Left lung (tissue), 14 donors: ENCODE measurements at regions of chr6 and their contacts with region 1.

Region 1: DNA sequence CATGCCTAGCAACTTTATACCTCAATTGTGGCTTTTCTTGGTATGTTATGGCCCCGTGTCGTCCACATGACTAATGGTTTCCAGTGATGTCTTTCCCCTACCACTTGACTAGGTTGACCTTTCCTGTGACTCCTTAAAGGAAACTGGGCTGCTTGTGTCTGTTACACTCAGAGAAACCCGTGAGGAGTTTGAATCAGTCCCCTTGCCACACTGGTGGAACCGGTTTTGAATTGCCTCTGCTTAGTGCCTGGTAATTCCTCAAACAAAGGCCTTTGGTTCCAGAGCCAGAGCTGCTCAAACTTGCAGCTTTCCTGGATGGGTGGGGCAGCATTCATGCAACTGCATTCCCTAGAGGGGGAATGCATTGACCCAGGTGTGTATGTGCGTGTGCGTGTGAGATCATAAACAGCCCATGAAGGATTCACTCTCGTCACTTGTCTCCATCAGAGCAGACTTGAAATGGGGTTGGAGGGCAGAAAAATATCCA is 22.0 kb downstream of the ECT2L start:
- DNase-seq: peak in 3 of 4 donors; percentile 65 to 91 (median 82)
- ATAC-seq: peak; percentile 83
- H3K4me3 ChIP-seq: no peak overlapping the region
- H3K27ac ChIP-seq: peak overlapping the region; percentile 48 to 82
- H3K4me1 ChIP-seq: peaks cover 0 to 5% of the 10 kb centered on the region in 2 donors
- H3K27me3 ChIP-seq: no peaks in the 10 kb centered on the region
- CTCF ChIP-seq: no peak

Region 2: DNA sequence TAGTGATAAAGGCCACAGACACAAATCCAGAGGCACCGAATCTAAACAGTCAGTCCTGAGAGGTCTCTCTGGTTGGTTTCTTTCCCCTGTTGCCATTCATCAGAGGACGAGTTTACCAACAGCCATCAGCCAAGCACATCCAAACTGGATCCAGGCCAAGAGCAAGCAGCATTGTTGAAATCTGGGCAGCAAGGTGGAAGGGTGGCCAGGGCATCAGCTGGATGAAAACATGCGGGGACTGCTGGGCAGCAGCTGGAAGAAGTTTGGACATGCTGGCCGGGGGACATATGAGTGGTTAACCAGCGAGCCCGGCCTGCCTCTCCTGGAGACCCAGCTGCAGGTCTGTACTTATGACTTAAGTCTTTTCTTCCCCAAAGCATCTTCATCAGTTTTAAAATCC is 440.0 kb before region 1 on chr6 and contains the start of gene SMIM28:
- intact Hi-C with region 1: no loop called
- DNase-seq: no peak
- ATAC-seq: no peak
- H3K4me3 ChIP-seq: no peak within 1 kb of the TSS
- H3K27ac ChIP-seq: no peak within 1 kb of the TSS
- H3K4me1 ChIP-seq: no peaks in the 10 kb centered on the region
- H3K27me3 ChIP-seq: no peaks in the 10 kb centered on the region
- CTCF ChIP-seq: no peak
- polyA plus RNA-seq, gene SMIM28: not detected

Region 3: DNA sequence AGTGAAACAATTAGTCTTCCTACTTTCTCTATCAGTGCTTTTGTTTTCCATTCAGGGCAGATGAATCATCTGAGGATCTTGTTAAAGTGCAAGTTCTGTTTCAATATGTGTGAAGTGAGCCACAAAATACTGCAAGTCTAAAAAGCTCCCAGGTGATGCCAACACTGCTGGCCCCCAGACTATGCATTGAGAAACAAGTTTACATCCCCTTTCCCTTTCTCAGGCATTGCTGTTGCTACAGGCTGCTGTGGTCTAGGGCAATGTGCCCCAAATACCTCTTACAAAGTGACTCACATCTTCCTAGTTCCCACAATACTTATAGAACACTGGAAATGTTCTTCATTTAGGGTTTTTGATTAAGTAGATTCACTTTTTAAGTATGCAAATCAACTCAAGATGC is 242.5 kb after region 1 on chr6:
- intact Hi-C with region 1: no loop called
- DNase-seq: no peak
- ATAC-seq: no peak
- H3K4me3 ChIP-seq: no peak overlapping the region
- H3K27ac ChIP-seq: no peak overlapping the region
- H3K4me1 ChIP-seq: no peaks in the 10 kb centered on the region
- H3K27me3 ChIP-seq: no peaks in the 10 kb centered on the region
- CTCF ChIP-seq: no peak

Region 4: GRCh38 chr6:139364302-139364981 is 546.6 kb after region 1 on chr6:
- intact Hi-C with region 1: loop called in 1 of 2 experiments (anchors 10 kb)
- DNase-seq: peak in 1 of 4 donors; percentile 59
- ATAC-seq: peak; percentile 75
- H3K4me3 ChIP-seq: no peak overlapping the region
- H3K27ac ChIP-seq: no peak overlapping the region
- H3K4me1 ChIP-seq: peaks cover 8 to 19% of the 10 kb centered on the region in 2 donors
- H3K27me3 ChIP-seq: no peaks in the 10 kb centered on the region
- CTCF ChIP-seq: peak; percentile 45 to 50